Activated CD4-positive, alpha-beta T cell treated with anti-CD3 and anti-CD28 coated beads, Interleukin-2, amount 10 ng/mL, durations not matched to agents 24 days and 14 days (primary cell): ENCODE measurements at regions of chr2 and their contacts with region 1.

Region 1: DNA sequence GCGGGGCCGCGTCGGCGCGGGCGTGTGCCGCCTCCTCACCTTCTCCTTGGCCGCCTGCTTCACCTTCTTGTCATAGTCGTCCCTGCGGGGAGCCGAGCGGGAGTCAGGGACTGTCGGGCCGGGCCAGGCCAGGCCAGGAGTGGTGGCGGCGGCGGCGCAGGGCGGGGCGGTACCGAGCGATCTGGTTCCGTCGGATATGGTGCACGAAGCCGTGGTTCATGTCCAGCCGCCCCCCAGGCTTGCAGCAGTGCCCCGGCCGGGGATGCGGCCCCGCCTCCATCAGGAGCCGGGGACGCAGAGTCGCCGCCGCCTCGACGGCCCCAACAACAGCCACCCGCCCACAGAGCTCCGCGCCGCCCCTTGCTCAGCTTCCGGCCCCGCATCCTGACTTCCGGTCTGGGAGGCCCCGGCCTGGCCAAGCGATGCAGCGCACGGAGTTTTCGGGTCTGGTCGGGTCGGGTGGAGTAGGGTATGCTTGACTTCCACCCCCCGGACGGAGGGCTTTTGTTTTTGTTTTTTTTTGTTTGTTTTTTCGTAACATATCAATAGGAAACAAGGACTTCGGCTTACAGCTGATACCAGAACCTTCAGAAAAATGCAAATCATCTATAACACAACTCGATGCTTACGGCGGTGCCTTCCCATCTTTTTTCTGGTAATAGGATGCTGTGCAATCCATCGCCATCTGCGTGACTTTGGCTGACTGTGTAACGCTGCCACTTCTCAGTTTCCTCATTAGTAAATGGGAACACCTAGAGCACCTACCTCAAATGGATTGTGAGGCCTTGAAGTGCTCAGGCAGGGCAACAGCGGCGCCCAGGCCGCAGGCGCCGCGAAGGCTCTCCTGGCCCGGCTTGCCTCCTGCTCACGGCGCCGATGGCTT is at the start of gene C2orf68:
- DNase-seq: peak; percentile 97
- H3K4me3 Mint-ChIP-seq: peak within 1 kb of the TSS; percentile 92
- H3K27ac Mint-ChIP-seq: peak within 1 kb of the TSS; percentile 91
- H3K4me1 Mint-ChIP-seq: peaks cover 13% of the 10 kb centered on the region
- H3K27me3 Mint-ChIP-seq: no peaks in the 10 kb centered on the region
- total RNA-seq, gene C2orf68: 36.6 and 36.9 TPM in 2 replicates

Region 2: GRCh38 chr2:86195055-86195807 is 583.3 kb after region 1 on chr2 and contains the start of gene IMMT:
- intact Hi-C with region 1: loop called (anchors 10 kb)
- DNase-seq: peak; percentile 98
- H3K4me3 Mint-ChIP-seq: peak within 1 kb of the TSS; percentile 99
- H3K27ac Mint-ChIP-seq: peak within 1 kb of the TSS; percentile 97
- H3K4me1 Mint-ChIP-seq: peaks cover 36% of the 10 kb centered on the region
- H3K27me3 Mint-ChIP-seq: no peaks in the 10 kb centered on the region
- total RNA-seq, gene IMMT: 181 and 188 TPM in 2 replicates

Region 3: GRCh38 chr2:86598966-86599365 is 987.0 kb after region 1 on chr2:
- intact Hi-C with region 1: no loop called
- DNase-seq: no peak
- H3K4me3 Mint-ChIP-seq: no peak overlapping the region
- H3K27ac Mint-ChIP-seq: no peak overlapping the region
- H3K4me1 Mint-ChIP-seq: no peaks in the 10 kb centered on the region
- H3K27me3 Mint-ChIP-seq: peaks cover 2% of the 10 kb centered on the region